AG04450 (cell line): ENCODE measurements at regions of chr1 and their contacts with region 1.

Region 1: DNA sequence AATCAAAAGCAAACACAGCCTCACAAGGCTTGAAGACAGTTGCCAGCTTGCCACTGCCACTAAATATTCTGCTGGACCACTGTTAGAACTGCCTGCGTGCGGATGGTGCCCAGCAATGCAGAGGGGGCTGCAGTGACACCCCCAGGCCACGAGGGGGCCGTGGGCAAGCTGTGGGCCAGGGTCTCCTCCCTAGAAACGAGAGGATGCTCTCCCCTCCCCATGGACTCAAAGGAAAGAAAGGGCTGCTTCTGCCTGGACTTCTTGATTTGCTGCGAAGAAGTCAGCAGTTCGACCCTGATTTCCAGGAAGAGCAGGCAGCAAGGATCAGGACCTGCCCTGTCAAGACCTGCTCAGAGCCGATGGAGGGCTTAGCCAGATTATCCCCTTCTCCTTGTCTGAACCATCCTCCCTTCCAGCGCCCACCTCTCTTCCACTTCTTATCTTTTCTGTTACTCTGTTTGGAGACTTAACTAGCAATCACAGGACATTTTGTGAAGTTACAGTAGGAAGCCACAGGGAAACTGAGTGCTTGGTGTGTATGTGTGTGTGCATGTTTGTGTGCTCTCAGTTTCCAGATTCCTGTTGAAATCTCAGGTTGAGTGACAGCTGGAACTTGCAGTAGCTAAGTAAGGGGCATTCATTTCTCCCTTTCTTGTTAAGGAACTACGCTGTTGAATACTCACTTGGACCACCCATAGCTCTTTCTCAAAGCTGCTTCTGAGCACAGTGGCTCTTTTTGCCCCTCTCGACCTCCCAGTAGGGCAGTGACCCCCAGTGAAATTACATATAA is 2.7 kb downstream of the MAN1C1 start:
- DNase-seq: no peak
- H3K4me3 ChIP-seq: peak overlapping the region; percentile 58
- H3K27ac ChIP-seq: no peak overlapping the region
- H3K27me3 ChIP-seq: peaks cover 17% of the 10 kb centered on the region
- CTCF ChIP-seq: peak; percentile 87

Region 2: DNA sequence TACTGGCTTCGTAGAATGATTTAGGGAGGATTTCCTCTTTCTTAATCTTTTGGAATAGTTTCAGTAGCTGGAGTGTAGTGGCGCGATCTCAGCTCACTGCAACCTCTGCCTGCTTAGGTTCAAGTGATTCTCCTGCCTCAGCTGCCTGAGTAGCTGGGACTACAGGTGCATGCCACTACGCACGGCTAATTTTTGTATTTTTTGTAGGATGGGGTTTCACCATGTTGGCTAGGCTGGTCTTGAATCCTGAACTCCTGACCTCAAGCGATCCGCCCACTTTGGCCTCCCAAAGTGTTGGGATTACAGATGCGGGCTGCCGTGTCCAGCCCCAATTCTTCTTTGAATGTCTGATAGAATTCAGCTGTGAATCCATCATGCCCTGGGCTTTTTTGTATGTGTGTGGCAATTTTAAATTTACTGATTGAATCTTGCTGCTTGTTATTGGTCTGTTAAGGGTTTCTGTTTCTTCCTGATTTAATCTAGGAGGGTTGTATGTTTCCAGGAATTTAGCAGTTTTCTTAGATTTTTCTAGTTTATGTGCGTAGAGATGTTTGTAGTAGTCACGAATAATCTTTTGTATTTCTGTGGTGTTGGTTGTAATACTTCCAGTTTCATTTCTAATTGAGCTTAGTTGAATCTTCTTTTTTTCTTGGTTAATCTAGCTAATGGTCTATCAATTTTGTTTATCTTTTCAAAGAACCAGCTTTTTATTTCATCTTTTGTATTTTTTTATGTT is 12.6 kb after region 1 on chr1:
- CTCF ChIA-PET with region 1: interaction called, 10 read pairs
- POLR2A ChIA-PET with region 1: no interaction called
- DNase-seq: no peak
- H3K4me3 ChIP-seq: no peak overlapping the region
- H3K27ac ChIP-seq: no peak overlapping the region
- H3K27me3 ChIP-seq: peaks cover 12% of the 10 kb centered on the region
- CTCF ChIP-seq: no peak

Region 3: GRCh38 chr1:25952841-25953401 is 333.6 kb after region 1 on chr1:
- CTCF ChIA-PET with region 1: no interaction called
- POLR2A ChIA-PET with region 1: no interaction called
- DNase-seq: peak; percentile 34
- H3K4me3 ChIP-seq: no peak overlapping the region
- H3K27ac ChIP-seq: peak overlapping the region; percentile 11
- H3K27me3 ChIP-seq: no peaks in the 10 kb centered on the region
- CTCF ChIP-seq: no peak